Caco-2 (cell line): ENCODE measurements at regions of chr13 and their contacts with region 1.

Region 1: DNA sequence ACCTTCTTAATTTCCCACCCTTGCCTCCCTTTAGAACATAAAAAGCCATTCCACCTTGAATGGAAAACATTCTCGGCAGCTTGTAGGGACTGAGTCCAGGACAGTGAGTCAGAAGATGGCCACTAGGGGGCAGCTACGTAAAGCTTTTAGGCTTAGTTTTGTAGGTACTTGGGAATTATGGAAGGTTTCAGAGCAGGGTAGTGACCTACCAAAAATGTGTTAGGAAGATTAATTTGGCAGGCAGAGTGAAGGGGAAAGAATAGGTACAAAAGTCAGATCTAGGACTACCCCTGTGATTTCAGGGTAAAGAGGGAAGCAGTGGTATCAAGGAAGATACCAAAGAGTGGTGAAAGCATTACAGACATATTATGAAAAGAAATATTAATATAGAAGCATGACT is 198.4 kb downstream of the NDFIP2 start:
- DNase-seq: peak; percentile 78 to 80
- H3K4me3 ChIP-seq: no peak overlapping the region
- H3K4me3 Mint-ChIP-seq: no peak overlapping the region
- H3K27ac Mint-ChIP-seq: no peak overlapping the region
- H3K4me1 ChIP-seq: 0 out of 2 replicates have a peak, but pooled peaks cover 15% of the 10 kb centered on the region
- H3K4me1 Mint-ChIP-seq: peaks cover 29% of the 10 kb centered on the region
- H3K27me3 ChIP-seq: no peaks in the 10 kb centered on the region
- H3K27me3 Mint-ChIP-seq: no peaks in the 10 kb centered on the region
- CTCF ChIP-seq: peak; percentile 87 to 89

Region 2: DNA sequence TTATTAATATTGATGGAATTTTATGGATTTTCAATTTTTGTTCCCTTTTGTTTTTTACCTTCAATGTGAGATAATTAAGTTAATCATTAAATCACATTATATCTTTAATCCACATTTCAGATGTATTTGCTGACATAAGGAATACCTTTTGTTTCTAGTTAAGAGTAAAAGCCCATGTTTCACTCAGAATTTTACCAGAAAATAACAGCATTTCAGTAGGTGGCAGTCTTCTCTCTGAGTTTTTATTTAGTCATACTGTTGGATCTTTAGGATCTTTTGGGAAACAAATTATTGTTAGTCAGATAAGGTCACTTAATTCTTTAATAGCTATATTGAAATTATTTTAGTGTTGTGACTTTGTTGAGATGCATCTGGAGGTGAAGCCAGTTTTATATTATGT is 130.4 kb before region 1 on chr13:
- CTCF ChIA-PET with region 1: interaction called, 4 read pairs
- POLR2A ChIA-PET with region 1: no interaction called
- intact Hi-C with region 1: loop called (anchors 1 kb)
- DNase-seq: no peak
- H3K4me3 ChIP-seq: no peak overlapping the region
- H3K4me3 Mint-ChIP-seq: no peak overlapping the region
- H3K27ac Mint-ChIP-seq: no peak overlapping the region
- H3K4me1 ChIP-seq: peaks cover 5% of the 10 kb centered on the region; the same call in 1 of the 2 replicates
- H3K4me1 Mint-ChIP-seq: peaks cover 11% of the 10 kb centered on the region
- H3K27me3 ChIP-seq: no peaks in the 10 kb centered on the region
- H3K27me3 Mint-ChIP-seq: no peaks in the 10 kb centered on the region
- CTCF ChIP-seq: peak; percentile 12 to 16

Region 3: DNA sequence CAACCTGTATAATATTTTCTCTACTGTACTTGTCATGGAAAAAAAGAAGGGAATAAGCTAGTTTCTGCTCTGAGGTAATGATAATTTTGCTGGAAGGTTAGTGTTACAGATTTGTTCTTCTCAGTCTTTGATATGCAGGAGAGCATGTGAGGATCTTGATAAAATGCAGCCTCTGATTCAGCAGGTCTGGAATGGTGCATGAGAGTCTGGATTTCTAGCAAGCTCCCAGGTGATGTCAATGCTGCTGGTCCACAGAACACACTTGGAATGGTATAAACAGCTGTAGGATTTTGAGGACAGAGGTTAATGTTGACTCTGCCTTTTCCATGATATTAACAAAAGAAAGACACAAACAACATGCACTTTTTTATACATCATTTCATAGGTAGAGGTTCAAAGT is 24.8 kb before region 1 on chr13:
- CTCF ChIA-PET with region 1: no interaction called
- POLR2A ChIA-PET with region 1: no interaction called
- intact Hi-C with region 1: no loop called
- DNase-seq: no peak
- H3K4me3 ChIP-seq: no peak overlapping the region
- H3K4me3 Mint-ChIP-seq: no peak overlapping the region
- H3K27ac Mint-ChIP-seq: no peak overlapping the region
- H3K4me1 ChIP-seq: no peaks in the 10 kb centered on the region
- H3K4me1 Mint-ChIP-seq: peaks cover 7% of the 10 kb centered on the region
- H3K27me3 ChIP-seq: no peaks in the 10 kb centered on the region
- H3K27me3 Mint-ChIP-seq: peaks cover 14% of the 10 kb centered on the region
- CTCF ChIP-seq: no peak

Region 4: DNA sequence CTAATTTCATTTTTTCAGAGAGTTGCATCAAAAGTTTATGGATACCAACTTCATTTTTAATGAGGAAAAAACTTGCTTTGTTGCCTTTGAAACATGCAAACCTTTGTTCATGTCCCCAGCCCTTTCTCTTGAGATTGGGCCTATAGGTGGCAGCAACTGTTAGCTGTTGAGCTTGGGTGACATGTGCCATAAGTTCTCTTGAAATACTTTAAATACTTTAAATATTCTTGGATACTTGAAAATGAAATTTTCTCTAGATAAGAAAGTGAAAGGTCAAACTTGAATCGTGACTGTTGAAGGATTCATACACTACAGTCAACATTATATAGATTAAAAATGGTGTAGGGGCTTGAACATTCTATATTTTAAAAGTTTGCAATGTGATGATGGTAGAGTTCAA is 96.5 kb after region 1 on chr13:
- CTCF ChIA-PET with region 1: interaction called, 7 read pairs
- POLR2A ChIA-PET with region 1: no interaction called
- intact Hi-C with region 1: loop called (anchors 1 kb)
- DNase-seq: peak; percentile 81 to 85
- H3K4me3 ChIP-seq: no peak overlapping the region
- H3K4me3 Mint-ChIP-seq: no peak overlapping the region
- H3K27ac Mint-ChIP-seq: peak overlapping the region; percentile 69
- H3K4me1 ChIP-seq: peaks cover 63% of the 10 kb centered on the region
- H3K4me1 Mint-ChIP-seq: peaks cover 56% of the 10 kb centered on the region
- H3K27me3 ChIP-seq: no peaks in the 10 kb centered on the region
- H3K27me3 Mint-ChIP-seq: no peaks in the 10 kb centered on the region
- CTCF ChIP-seq: peak; percentile 78 to 87

Region 5: GRCh38 chr13:80132741-80133601 is 453.6 kb after region 1 on chr13:
- CTCF ChIA-PET with region 1: no interaction called
- POLR2A ChIA-PET with region 1: no interaction called
- intact Hi-C with region 1: loop called (anchors 5 kb)
- DNase-seq: peak; percentile 87 to 96
- H3K4me3 ChIP-seq: 0 out of 2 replicates have a peak overlapping the region, but pooled peaks have one; percentile 13
- H3K4me3 Mint-ChIP-seq: peak overlapping the region; percentile 74
- H3K27ac Mint-ChIP-seq: peak overlapping the region; percentile 91
- H3K4me1 ChIP-seq: peaks cover 28% of the 10 kb centered on the region
- H3K4me1 Mint-ChIP-seq: peaks cover 24% of the 10 kb centered on the region
- H3K27me3 ChIP-seq: no peaks in the 10 kb centered on the region
- H3K27me3 Mint-ChIP-seq: peaks cover 2% of the 10 kb centered on the region
- CTCF ChIP-seq: no peak

Region 6: GRCh38 chr13:80363890-80364503 is 684.7 kb after region 1 on chr13:
- CTCF ChIA-PET with region 1: no interaction called
- POLR2A ChIA-PET with region 1: no interaction called
- intact Hi-C with region 1: loop called (anchors 1 kb)
- DNase-seq: peak in 1 of 2 experiments; percentile 39
- H3K4me3 ChIP-seq: no peak overlapping the region
- H3K4me3 Mint-ChIP-seq: no peak overlapping the region
- H3K27ac Mint-ChIP-seq: no peak overlapping the region
- H3K4me1 ChIP-seq: peaks cover 26% of the 10 kb centered on the region
- H3K4me1 Mint-ChIP-seq: peaks cover 16% of the 10 kb centered on the region
- H3K27me3 ChIP-seq: no peaks in the 10 kb centered on the region
- H3K27me3 Mint-ChIP-seq: no peaks in the 10 kb centered on the region
- CTCF ChIP-seq: peak; percentile 83 to 85